Activated CD8-positive, alpha-beta T cell treated with anti-CD3 and anti-CD28 coated beads, Interleukin-2, amount 10 ng/mL, durations not matched to agents 7 days and 5 days (primary cell): ENCODE measurements at regions of chr15 and their contacts with region 1.

Region 1: GRCh38 chr15:60585743-60586708 is 107.1 kb upstream of the ICE2 start:
- DNase-seq: peak; percentile 78
- ATAC-seq: no peak
- H3K4me3 Mint-ChIP-seq: peak overlapping the region; percentile 55
- H3K27ac Mint-ChIP-seq: peak overlapping the region; percentile 84
- H3K4me1 Mint-ChIP-seq: peaks cover 90% of the 10 kb centered on the region
- H3K27me3 Mint-ChIP-seq: no peaks in the 10 kb centered on the region

Region 2: DNA sequence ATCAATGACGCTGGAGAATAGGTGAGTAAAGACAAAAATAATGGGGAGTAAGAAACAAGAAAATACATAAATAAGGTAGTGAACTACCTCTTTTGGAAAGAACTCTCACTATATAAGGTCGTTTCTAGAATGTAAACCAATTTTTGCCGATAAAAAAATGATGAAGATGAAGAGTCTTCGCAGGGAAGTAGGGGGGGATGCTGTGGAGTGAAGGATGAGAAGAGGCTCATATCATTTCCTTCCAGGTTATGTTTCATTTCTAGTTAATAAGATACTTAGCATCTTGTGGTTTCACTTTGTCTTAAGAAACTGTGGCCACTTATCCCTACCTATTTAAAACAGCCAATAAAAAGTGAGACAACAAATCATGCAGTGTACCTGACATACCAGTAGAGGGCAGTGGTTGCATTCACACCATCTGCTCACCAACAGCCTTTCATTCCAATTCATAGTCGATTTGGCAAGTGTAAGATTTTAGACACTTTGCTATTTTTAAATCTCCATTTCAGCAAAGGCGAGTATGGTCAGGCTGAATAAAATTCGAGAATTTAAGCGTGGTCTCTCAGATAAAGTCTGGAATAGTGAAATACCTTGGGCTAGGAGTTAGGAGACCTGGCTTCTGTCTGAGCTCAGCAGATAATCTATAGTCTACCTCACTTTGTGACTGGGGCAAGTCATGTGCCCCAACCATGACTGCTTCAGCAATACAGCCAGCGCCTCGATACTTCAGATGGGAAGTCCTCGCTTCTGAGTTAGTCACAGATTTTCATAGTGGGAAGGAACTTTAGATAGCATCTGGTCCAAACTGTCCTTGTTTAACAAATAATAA is 78.2 kb before region 1 on chr15:
- CTCF ChIA-PET with region 1: interaction called, 37 read pairs
- POLR2A ChIA-PET with region 1: interaction called, 7 read pairs
- DNase-seq: peak; percentile 75
- ATAC-seq: peak; percentile 80
- H3K4me3 Mint-ChIP-seq: peak overlapping the region; percentile 19
- H3K27ac Mint-ChIP-seq: peak overlapping the region; percentile 84
- H3K4me1 Mint-ChIP-seq: peaks cover 42% of the 10 kb centered on the region
- H3K27me3 Mint-ChIP-seq: no peaks in the 10 kb centered on the region

Region 3: GRCh38 chr15:60541481-60542299 is 44.3 kb before region 1 on chr15:
- CTCF ChIA-PET with region 1: interaction called, 23 read pairs
- POLR2A ChIA-PET with region 1: interaction called, 4 read pairs
- DNase-seq: no peak
- ATAC-seq: no peak
- H3K4me3 Mint-ChIP-seq: no peak overlapping the region
- H3K27ac Mint-ChIP-seq: peak overlapping the region; percentile 44
- H3K4me1 Mint-ChIP-seq: peaks cover 86% of the 10 kb centered on the region
- H3K27me3 Mint-ChIP-seq: no peaks in the 10 kb centered on the region

Region 4: DNA sequence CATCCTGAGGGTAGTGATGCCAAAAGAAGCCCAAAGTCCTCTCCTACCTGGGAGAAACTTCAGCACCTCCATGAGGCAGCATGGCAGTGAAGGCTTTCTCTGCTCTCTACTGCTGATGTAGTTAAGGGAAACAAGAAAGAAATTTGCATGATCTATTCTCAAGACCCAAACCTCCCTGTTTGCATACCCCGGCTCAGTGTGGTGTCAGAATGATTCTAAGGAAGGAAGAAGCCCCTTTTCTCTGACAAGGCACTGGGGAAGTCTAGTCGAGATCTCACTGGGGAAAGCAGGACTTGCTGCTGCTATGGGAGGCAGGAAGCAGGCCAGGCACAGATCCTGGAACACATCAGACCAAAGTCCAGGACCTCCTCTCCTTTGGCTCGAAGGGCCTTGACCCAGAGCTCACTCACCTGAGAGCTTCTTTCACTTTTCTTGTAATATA is 17.7 kb before region 1 on chr15:
- CTCF ChIA-PET with region 1: interaction called, 116 read pairs
- POLR2A ChIA-PET with region 1: interaction called, 97 read pairs
- DNase-seq: no peak
- ATAC-seq: no peak
- H3K4me3 Mint-ChIP-seq: peak overlapping the region; percentile 19
- H3K27ac Mint-ChIP-seq: peak overlapping the region; percentile 73
- H3K4me1 Mint-ChIP-seq: peaks cover 87% of the 10 kb centered on the region
- H3K27me3 Mint-ChIP-seq: no peaks in the 10 kb centered on the region

Region 5: DNA sequence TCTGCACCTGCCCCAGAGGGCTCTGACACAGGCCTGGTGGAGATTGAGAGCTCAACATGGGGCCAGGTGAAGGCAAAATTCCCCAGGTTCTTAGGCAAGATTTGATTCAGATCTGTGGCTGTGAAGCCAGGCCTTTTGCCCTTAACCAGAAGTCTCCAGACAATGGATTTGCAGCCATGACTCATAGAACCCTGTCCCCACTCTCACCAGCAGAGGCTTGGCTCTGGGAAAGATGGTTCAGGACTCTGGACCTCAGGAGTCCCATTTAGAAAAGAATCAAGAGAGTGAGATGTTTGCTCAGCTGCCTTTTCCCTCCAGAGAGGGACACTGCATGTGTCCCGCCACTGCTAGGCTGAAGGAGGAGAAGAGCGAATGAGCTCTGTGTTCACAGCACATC is 254.3 kb after region 1 on chr15:
- CTCF ChIA-PET with region 1: interaction called, 12 read pairs
- POLR2A ChIA-PET with region 1: interaction called, 3 read pairs
- DNase-seq: no peak
- ATAC-seq: no peak
- H3K4me3 Mint-ChIP-seq: peak overlapping the region; percentile 72
- H3K27ac Mint-ChIP-seq: peak overlapping the region; percentile 94
- H3K4me1 Mint-ChIP-seq: peaks cover 61% of the 10 kb centered on the region
- H3K27me3 Mint-ChIP-seq: peaks cover 30% of the 10 kb centered on the region

Region 6: DNA sequence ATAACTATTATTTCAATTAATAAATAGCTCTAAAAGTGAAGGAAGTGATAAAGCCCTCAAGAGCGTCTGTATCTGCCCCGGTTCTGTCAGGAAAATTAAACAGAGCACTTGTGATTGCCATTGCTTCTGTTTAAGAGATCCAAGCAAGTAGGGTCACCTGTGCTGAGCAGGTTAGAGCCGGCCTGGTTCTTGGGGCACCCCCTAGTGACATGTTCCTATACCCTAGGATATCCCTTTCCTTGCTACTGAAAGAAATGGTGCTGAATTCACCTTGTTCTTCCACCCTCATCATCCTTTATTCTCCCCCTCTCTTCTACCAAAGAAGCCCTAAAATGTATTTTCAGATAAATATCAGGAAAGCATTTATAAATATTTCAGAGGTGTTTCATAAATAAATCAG is 319.6 kb after region 1 on chr15:
- CTCF ChIA-PET with region 1: interaction called, 28 read pairs
- POLR2A ChIA-PET with region 1: no interaction called
- DNase-seq: peak; percentile 44
- ATAC-seq: peak; percentile 67
- H3K4me3 Mint-ChIP-seq: no peak overlapping the region
- H3K27ac Mint-ChIP-seq: no peak overlapping the region
- H3K4me1 Mint-ChIP-seq: peaks cover 33% of the 10 kb centered on the region
- H3K27me3 Mint-ChIP-seq: peaks cover 6% of the 10 kb centered on the region